Motor neuron (in vitro differentiated cells): ENCODE measurements at regions of chr3 and their contacts with region 1.

Region 1: GRCh38 chr3:132399054-132399929 is 18.0 kb upstream of the DNAJC13 start:
- ATAC-seq: peak; percentile 61 to 83 (median 71)
- H3K4me3 ChIP-seq: no peak overlapping the region
- H3K27ac ChIP-seq: no peak overlapping the region
- H3K4me1 ChIP-seq: no peaks in the 10 kb centered on the region

Region 2: GRCh38 chr3:132352541-132353143 is 46.6 kb before region 1 on chr3:
- in situ Hi-C with region 1: loop called in 1 of 9 experiments (anchors 5 kb)
- ATAC-seq: peak; percentile 48 to 88 (median 62)
- H3K4me3 ChIP-seq: no peak overlapping the region
- H3K27ac ChIP-seq: no peak overlapping the region
- H3K4me1 ChIP-seq: peaks cover 8 to 12% of the 10 kb centered on the region in 2 donors